ENCODE measurements at regions of chr2 and their contacts with region 1.

Region 1: DNA sequence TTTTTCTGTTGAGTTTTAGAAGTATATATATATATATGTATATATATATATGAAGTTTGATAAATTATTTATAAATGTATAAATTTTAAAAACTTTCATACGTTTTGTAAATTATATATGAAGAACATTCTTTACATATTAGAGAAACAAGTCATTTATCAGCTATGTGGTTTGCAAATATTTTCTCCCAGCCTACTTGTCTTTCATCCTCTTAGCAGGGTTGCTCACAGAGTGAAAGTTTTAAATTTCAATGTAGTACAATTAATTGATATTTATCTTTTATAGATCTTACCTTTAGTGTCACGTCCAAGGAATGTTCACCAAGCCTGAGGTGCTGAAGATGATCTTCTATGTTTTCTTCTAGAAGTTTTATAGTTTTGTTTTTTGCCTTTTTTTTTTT is 78.3 kb upstream of the HS6ST1 start:
- DNase-seq: no peak
- H3K4me3 ChIP-seq: no peak overlapping the region
- H3K27ac ChIP-seq: no peak overlapping the region
- H3K4me1 ChIP-seq: peaks cover 4% of the 10 kb centered on the region
- H3K27me3 ChIP-seq: no peaks in the 10 kb centered on the region
- CTCF ChIP-seq: no peak

Region 2: GRCh38 chr2:128016620-128017019 is 380.3 kb before region 1 on chr2:
- CTCF ChIA-PET with region 1: no interaction called
- dilution Hi-C with region 1: no loop called
- in situ Hi-C with region 1: no loop called
- intact Hi-C with region 1: no loop called
- DNase-seq: no peak
- H3K4me3 ChIP-seq: no peak overlapping the region
- H3K27ac ChIP-seq: no peak overlapping the region
- H3K4me1 ChIP-seq: no peaks in the 10 kb centered on the region
- H3K27me3 ChIP-seq: no peaks in the 10 kb centered on the region
- CTCF ChIP-seq: no peak

Region 3: GRCh38 chr2:129885736-129886135 is 1488.8 kb after region 1 on chr2:
- CTCF ChIA-PET with region 1: interaction called, 11 read pairs
- dilution Hi-C with region 1: no loop called
- in situ Hi-C with region 1: no loop called
- intact Hi-C with region 1: no loop called
- DNase-seq: no peak
- H3K4me3 ChIP-seq: no peak overlapping the region
- H3K27ac ChIP-seq: no peak overlapping the region
- H3K4me1 ChIP-seq: no peaks in the 10 kb centered on the region
- H3K27me3 ChIP-seq: peaks cover 5% of the 10 kb centered on the region
- CTCF ChIP-seq: peak in 1 of 2 donors; percentile 17

Measured in mammary epithelial cell (primary cell).